CD8-positive, alpha-beta T cell (primary cell): ENCODE measurements at regions of chr3 and their contacts with region 1.

Region 1: GRCh38 chr3:108818404-108818803 is 4.2 kb upstream of the TRAT1 start:
- DNase-seq: peak; percentile 16 to 82 (median 55)
- ATAC-seq: peak; percentile 91
- H3K4me3 ChIP-seq: no peak overlapping the region
- H3K4me3 Mint-ChIP-seq: no peak overlapping the region
- H3K27ac ChIP-seq: no peak overlapping the region
- H3K27ac Mint-ChIP-seq: peak overlapping the region; percentile 42
- H3K4me1 ChIP-seq: peaks cover 23% of the 10 kb centered on the region
- H3K4me1 Mint-ChIP-seq: peaks cover 33% of the 10 kb centered on the region
- H3K27me3 ChIP-seq: no peaks in the 10 kb centered on the region
- H3K27me3 Mint-ChIP-seq: no peaks in the 10 kb centered on the region
- CTCF ChIP-seq: peak; percentile 71

Region 2: GRCh38 chr3:108489771-108490170 is 328.6 kb before region 1 on chr3:
- CTCF ChIA-PET with region 1: interaction called, 6 read pairs
- POLR2A ChIA-PET with region 1: no interaction called
- intact Hi-C with region 1: loop called (anchors 1 kb)
- DNase-seq: peak in 7 of 9 experiments; percentile 7 to 80 (median 37)
- ATAC-seq: peak; percentile 93
- H3K4me3 ChIP-seq: no peak overlapping the region
- H3K4me3 Mint-ChIP-seq: no peak overlapping the region
- H3K27ac ChIP-seq: no peak overlapping the region
- H3K27ac Mint-ChIP-seq: no peak overlapping the region
- H3K4me1 ChIP-seq: no peaks in the 10 kb centered on the region
- H3K4me1 Mint-ChIP-seq: peaks cover 3% of the 10 kb centered on the region
- H3K27me3 ChIP-seq: peaks cover 0 to 2% of the 10 kb centered on the region in 2 experiments
- H3K27me3 Mint-ChIP-seq: peaks cover 3% of the 10 kb centered on the region
- CTCF ChIP-seq: peak; percentile 85

Region 3: DNA sequence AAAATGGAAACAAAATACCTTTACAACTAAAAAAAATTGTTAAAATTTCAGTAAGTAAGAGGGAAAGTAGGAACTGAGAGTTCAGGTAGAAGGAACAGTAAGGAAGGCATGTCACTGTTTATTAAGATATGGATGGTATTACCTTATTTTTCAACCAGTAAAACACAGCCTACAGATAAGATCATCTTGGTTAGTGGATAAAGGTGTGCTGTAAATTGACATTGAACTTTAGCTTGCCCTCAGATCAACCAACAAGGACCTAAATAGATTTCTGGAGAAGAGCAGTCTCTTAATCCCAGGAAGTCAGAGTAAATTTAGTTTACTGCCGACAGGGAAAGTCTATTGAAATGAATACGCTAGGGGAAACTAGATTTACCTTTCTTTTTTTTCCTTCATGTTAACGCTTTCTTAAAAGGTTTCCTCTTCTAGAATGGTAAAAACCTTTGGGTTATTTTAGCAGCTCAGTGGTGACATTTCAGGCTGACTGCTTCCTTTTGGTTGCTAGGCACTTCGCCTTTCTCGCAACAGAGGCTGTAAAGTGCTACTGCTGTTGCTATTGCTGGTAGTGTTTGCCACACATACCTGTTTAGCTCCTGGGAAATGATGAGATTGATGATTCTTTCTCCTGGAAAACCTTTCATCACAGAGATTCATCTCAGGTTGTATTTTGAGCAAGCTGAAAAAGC is 216.0 kb before region 1 on chr3:
- CTCF ChIA-PET with region 1: interaction called, 4 read pairs
- POLR2A ChIA-PET with region 1: no interaction called
- intact Hi-C with region 1: loop called in 1 of 2 experiments (anchors 5 kb)
- DNase-seq: peak in 8 of 9 experiments; percentile 20 to 79 (median 46)
- ATAC-seq: peak; percentile 87
- H3K4me3 ChIP-seq: peak overlapping the region; percentile 11 to 31
- H3K4me3 Mint-ChIP-seq: peak overlapping the region; percentile 80
- H3K27ac ChIP-seq: peak overlapping the region; percentile 32 to 75
- H3K27ac Mint-ChIP-seq: peak overlapping the region; percentile 94
- H3K4me1 ChIP-seq: peaks cover 45% of the 10 kb centered on the region
- H3K4me1 Mint-ChIP-seq: peaks cover 67% of the 10 kb centered on the region
- H3K27me3 ChIP-seq: no peaks in the 10 kb centered on the region
- H3K27me3 Mint-ChIP-seq: no peaks in the 10 kb centered on the region
- CTCF ChIP-seq: no peak

Region 4: GRCh38 chr3:108673988-108674661 is 144.3 kb before region 1 on chr3:
- CTCF ChIA-PET with region 1: interaction called, 12 read pairs
- POLR2A ChIA-PET with region 1: no interaction called
- intact Hi-C with region 1: no loop called
- DNase-seq: no peak
- ATAC-seq: no peak
- H3K4me3 ChIP-seq: no peak overlapping the region
- H3K4me3 Mint-ChIP-seq: no peak overlapping the region
- H3K27ac ChIP-seq: no peak overlapping the region
- H3K27ac Mint-ChIP-seq: no peak overlapping the region
- H3K4me1 ChIP-seq: no peaks in the 10 kb centered on the region
- H3K4me1 Mint-ChIP-seq: peaks cover 2% of the 10 kb centered on the region
- H3K27me3 ChIP-seq: no peaks in the 10 kb centered on the region
- H3K27me3 Mint-ChIP-seq: no peaks in the 10 kb centered on the region
- CTCF ChIP-seq: no peak

Region 5: GRCh38 chr3:108835101-108835500 is 16.7 kb after region 1 on chr3:
- CTCF ChIA-PET with region 1: interaction called, 8 read pairs
- POLR2A ChIA-PET with region 1: interaction called, 6 read pairs
- intact Hi-C with region 1: loop called (anchors 2 kb)
- DNase-seq: peak in 4 of 9 experiments; percentile 36 to 78 (median 60)
- ATAC-seq: peak; percentile 90
- H3K4me3 ChIP-seq: no peak overlapping the region
- H3K4me3 Mint-ChIP-seq: peak overlapping the region; percentile 66
- H3K27ac ChIP-seq: peak overlapping the region; percentile 13 to 43
- H3K27ac Mint-ChIP-seq: peak overlapping the region; percentile 90
- H3K4me1 ChIP-seq: peaks cover 60% of the 10 kb centered on the region
- H3K4me1 Mint-ChIP-seq: peaks cover 84% of the 10 kb centered on the region
- H3K27me3 ChIP-seq: no peaks in the 10 kb centered on the region
- H3K27me3 Mint-ChIP-seq: no peaks in the 10 kb centered on the region
- CTCF ChIP-seq: no peak

Region 6: DNA sequence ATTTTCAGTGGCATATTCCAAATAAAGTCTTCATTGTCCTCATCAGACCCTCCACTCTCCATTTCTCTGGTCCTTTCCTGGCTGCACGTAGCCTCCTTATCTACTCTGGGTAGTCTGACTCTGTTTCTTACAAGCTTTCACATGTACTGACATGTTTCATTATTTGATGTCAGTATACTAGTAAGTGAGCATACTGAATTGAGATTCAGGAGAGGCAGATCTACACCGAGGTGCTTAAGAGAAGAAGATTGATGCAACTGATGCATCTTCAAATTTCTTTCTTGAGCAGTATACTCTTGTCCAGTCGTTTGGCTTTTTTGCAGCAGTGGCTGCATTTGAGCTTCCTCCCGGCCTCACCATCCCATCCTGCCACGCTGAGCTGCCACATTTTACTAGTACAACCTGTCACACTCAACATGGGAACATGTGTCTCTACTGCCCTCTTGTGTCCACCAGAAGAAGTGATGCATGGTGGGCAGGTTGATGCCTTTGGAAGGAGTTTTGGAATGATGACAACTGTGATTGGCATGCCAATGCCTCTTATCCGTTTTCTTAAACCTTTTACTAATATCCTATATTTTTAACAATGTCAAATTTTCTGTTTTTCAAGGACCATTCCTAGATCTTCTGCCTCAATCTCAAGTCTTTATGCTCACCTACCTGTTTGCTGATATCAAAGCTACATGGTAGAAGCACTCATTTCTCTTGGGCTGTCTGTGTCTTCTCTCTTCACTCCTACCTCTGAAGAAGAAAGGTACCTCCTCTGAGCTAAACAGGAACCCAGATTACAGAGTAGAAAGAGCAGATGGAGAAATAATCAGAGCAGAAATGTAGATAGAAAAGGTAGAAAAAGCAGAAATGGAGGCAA is 96.6 kb after region 1 on chr3:
- CTCF ChIA-PET with region 1: interaction called, 84 read pairs
- POLR2A ChIA-PET with region 1: no interaction called
- intact Hi-C with region 1: loop called (anchors 1 to 2 kb)
- DNase-seq: peak; percentile 13 to 82 (median 58)
- ATAC-seq: peak; percentile 96
- H3K4me3 ChIP-seq: no peak overlapping the region
- H3K4me3 Mint-ChIP-seq: no peak overlapping the region
- H3K27ac ChIP-seq: no peak overlapping the region
- H3K27ac Mint-ChIP-seq: no peak overlapping the region
- H3K4me1 ChIP-seq: no peaks in the 10 kb centered on the region
- H3K4me1 Mint-ChIP-seq: peaks cover 12% of the 10 kb centered on the region
- H3K27me3 ChIP-seq: no peaks in the 10 kb centered on the region
- H3K27me3 Mint-ChIP-seq: peaks cover 4% of the 10 kb centered on the region
- CTCF ChIP-seq: peak; percentile 89